MCF 10A (cell line): ENCODE measurements at regions of chr11 and their contacts with region 1.

Region 1: GRCh38 chr11:34653826-34654490 is 33.1 kb downstream of the EHF start:
- DNase-seq: peak; percentile 98
- H3K4me3 Mint-ChIP-seq: peak overlapping the region; percentile 3
- H3K27ac Mint-ChIP-seq: peak overlapping the region; percentile 96
- H3K4me1 Mint-ChIP-seq: peaks cover 51% of the 10 kb centered on the region
- H3K27me3 Mint-ChIP-seq: no peaks in the 10 kb centered on the region
- CTCF ChIP-seq: no peak

Region 2: DNA sequence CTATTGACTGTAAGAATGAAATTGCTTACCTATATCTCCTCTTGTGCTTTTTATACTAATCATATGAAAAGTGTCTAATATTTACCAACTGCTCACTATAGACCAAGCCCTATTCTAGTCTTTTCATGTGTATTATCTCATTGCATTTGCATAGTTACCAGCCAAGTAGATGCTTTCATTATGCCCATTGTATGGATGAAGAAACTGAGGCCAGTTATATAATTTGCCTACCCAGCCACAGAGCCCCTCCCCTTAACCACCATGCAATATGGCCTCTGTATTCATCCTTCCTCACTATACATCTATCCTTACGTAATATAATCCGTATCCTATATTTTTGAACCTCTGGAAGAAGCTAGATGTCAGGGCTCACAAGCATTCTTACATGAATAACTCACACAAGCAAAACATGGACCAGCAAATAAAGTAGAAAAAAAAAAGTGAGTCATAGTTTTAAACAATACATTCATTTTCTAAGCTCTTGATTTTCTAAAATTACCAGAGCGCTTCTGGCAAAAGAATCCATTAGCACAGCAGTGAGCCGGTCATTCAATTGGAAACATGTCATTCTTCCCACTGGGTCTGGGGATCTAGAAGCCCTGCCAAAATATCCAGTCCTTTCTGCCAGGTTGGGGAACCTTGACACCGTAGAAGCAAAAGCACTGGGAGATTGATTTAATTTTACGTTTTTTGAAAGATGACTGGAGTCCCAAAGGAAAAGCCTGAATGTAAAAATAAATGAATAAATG is 1033.4 kb before region 1 on chr11:
- CTCF ChIA-PET with region 1: no interaction called
- POLR2A ChIA-PET with region 1: no interaction called
- intact Hi-C with region 1: no loop called
- DNase-seq: peak; percentile 16
- H3K4me3 Mint-ChIP-seq: no peak overlapping the region
- H3K27ac Mint-ChIP-seq: no peak overlapping the region
- H3K4me1 Mint-ChIP-seq: peaks cover 24% of the 10 kb centered on the region
- H3K27me3 Mint-ChIP-seq: no peaks in the 10 kb centered on the region
- CTCF ChIP-seq: no peak

Region 3: DNA sequence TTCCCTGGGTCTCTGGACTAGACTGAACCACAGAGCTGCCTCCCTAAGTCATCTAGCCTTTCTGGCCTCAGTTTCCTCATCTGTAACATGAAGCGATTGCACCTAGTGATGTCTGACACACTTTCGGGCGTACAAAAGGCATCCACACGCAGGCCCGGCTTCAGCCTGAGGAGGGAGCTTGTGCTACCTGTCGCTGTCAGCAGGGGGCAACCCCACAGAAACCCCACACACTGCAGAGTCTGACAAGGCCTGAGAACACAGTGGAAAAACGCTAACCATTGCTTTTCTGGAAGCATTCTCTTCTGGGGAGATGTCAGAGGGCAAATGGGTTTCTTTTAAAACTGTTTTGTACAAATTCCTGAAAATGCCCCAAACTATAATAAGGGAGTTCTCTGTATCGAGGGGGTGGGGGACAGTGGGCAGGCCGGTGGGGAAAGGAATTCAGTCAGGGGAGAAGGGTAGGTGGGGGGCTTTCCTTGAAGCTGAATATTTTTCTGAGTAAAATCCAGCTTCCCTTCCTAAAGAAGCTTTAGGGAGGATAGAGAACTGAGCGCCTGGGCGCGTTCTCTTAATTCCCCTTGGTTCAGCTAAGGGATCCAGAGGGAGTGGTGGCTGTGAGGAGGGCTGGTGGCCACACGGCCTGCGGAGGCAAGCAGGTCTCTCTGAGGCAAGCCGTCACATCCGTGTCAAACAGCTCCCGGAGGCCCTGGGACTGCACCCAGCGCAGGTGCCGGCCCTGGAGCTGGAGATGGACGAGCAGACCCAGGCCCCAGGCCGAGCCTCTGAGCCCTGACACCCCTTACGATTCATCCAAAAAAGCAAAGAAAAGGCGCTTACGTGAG is 140.9 kb before region 1 on chr11:
- CTCF ChIA-PET with region 1: interaction called, 3 read pairs
- POLR2A ChIA-PET with region 1: no interaction called
- intact Hi-C with region 1: loop called (anchors 2 kb)
- DNase-seq: peak; percentile 66
- H3K4me3 Mint-ChIP-seq: no peak overlapping the region
- H3K27ac Mint-ChIP-seq: no peak overlapping the region
- H3K4me1 Mint-ChIP-seq: no peaks in the 10 kb centered on the region
- H3K27me3 Mint-ChIP-seq: peaks cover 5% of the 10 kb centered on the region
- CTCF ChIP-seq: peak; percentile 63

Region 4: GRCh38 chr11:34599406-34599901 is 54.5 kb before region 1 on chr11:
- CTCF ChIA-PET with region 1: interaction called, 6 read pairs
- POLR2A ChIA-PET with region 1: interaction called, 9 read pairs
- intact Hi-C with region 1: loop called (anchors 1 kb)
- DNase-seq: peak; percentile 51
- H3K4me3 Mint-ChIP-seq: no peak overlapping the region
- H3K27ac Mint-ChIP-seq: peak overlapping the region; percentile 25
- H3K4me1 Mint-ChIP-seq: peaks cover 33% of the 10 kb centered on the region
- H3K27me3 Mint-ChIP-seq: no peaks in the 10 kb centered on the region
- CTCF ChIP-seq: no peak

Region 5: GRCh38 chr11:34640050-34640923 is 13.7 kb before region 1 on chr11:
- CTCF ChIA-PET with region 1: interaction called, 20 read pairs
- POLR2A ChIA-PET with region 1: interaction called, 273 read pairs
- intact Hi-C with region 1: no loop called
- DNase-seq: peak; percentile 86
- H3K4me3 Mint-ChIP-seq: peak overlapping the region; percentile 45
- H3K27ac Mint-ChIP-seq: peak overlapping the region; percentile 87
- H3K4me1 Mint-ChIP-seq: peaks cover 51% of the 10 kb centered on the region
- H3K27me3 Mint-ChIP-seq: no peaks in the 10 kb centered on the region
- CTCF ChIP-seq: no peak

Region 6: GRCh38 chr11:34680918-34681554 is 27.1 kb after region 1 on chr11:
- CTCF ChIA-PET with region 1: interaction called, 5 read pairs
- POLR2A ChIA-PET with region 1: interaction called, 63 read pairs
- intact Hi-C with region 1: loop called (anchors 2 kb)
- DNase-seq: peak; percentile 72
- H3K4me3 Mint-ChIP-seq: no peak overlapping the region
- H3K27ac Mint-ChIP-seq: peak overlapping the region; percentile 93
- H3K4me1 Mint-ChIP-seq: peaks cover 42% of the 10 kb centered on the region
- H3K27me3 Mint-ChIP-seq: no peaks in the 10 kb centered on the region
- CTCF ChIP-seq: no peak

Region 7: GRCh38 chr11:34855021-34855753 is 201.2 kb after region 1 on chr11:
- CTCF ChIA-PET with region 1: no interaction called
- POLR2A ChIA-PET with region 1: interaction called, 15 read pairs
- intact Hi-C with region 1: no loop called
- DNase-seq: peak; percentile 43
- H3K4me3 Mint-ChIP-seq: no peak overlapping the region
- H3K27ac Mint-ChIP-seq: no peak overlapping the region
- H3K4me1 Mint-ChIP-seq: peaks cover 20% of the 10 kb centered on the region
- H3K27me3 Mint-ChIP-seq: no peaks in the 10 kb centered on the region
- CTCF ChIP-seq: no peak

Region 8: DNA sequence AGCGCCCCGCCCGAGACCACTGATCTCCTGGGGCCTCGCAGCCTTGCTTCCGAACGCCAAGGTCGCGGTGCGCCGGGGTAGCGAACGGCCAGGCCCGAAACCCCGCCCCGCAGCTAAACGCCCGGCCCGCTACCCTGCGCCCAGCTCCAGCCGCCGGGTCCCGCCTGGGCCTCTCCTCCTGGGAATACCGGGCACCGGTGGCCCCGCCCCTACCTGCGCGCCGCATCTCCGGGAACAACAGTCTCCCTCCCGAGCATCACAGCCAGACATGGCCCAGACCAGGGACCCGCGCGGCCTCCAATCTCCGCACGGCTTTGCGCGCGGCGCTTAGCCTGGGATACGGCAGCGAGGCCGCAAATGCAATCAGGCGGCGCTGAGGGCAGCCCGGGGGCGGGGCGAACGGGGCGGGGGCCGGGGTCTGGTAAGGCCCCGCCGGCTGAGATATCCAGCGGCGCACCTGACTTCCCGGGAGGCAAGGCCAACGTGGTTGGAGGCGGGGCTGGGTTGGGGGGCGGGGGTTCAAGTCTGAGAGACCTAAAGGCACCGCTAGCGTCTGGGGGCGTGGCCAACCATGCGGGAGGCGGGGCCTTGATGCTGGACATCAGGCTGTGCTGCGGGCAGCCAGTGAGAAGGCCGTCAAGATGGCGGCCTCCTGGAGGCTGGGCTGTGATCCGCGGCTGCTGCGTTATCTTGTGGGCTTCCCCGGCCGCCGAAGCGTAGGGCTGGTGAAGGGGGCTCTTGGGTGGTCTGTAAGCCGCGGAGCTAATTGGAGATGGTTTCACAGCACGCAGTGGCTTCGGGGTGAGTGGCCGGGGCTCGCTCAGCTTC is 262.3 kb after region 1 on chr11 and contains the starts of genes APIP and PDHX:
- CTCF ChIA-PET with region 1: no interaction called
- POLR2A ChIA-PET with region 1: interaction called, 11 read pairs
- intact Hi-C with region 1: no loop called
- DNase-seq: peak; percentile 99
- H3K4me3 Mint-ChIP-seq: peak within 1 kb of the TSS; percentile 99
- H3K27ac Mint-ChIP-seq: peak within 1 kb of the TSS; percentile 99
- H3K4me1 Mint-ChIP-seq: peaks cover 19% of the 10 kb centered on the region
- H3K27me3 Mint-ChIP-seq: no peaks in the 10 kb centered on the region
- CTCF ChIP-seq: no peak
- total RNA-seq, gene APIP: 32.4 and 36.9 TPM in 2 replicates
- total RNA-seq, gene PDHX: 35.5 and 35.9 TPM in 2 replicates